ENCODE measurements at regions of chrX and their contacts with region 1.

Region 1: DNA sequence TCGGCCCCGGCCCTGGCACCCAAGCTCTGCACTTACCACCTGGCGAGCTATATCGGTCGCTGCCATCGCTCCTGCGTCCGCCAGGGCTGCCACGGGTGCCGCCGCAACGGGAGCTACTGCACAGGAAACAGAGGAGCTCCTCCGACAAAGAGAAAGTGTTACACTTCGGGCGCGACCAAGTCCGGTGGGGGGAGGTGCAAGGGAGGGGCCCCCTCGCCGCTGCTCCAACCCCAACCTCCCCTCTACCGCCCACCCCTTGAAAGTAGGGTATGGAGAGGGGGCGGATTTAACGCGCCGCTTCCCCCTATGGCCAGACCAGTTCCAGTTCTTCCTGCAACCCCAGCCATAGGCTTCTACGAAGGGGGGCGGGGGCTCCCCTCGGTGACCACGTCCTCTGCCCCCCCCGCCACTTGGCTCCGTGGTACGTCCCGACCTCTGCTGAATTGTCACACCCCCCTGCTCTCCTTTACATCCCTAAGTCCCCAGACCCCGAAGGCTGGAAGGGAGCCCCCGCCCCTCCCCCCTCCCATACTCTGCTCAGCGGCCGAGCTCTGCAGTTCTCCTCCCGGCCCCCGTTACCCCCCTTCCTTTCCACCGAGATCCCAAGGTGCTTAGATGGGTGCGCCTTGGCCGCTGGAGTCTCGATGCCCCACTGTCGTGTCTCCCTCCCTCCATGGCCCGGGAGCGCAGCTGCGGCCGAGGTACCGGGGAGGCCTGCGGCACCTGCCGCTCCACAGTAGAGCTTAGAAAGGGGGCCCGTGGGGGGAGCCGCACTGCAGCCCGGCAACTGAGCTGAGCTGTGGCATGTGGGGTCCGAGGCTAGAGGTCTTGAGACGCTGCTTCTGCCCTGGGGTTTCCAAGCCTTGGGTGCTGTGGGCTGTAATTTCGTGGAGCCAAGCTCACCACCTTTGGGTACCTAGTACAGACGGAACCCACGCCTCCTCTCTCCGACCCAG is at the start of gene SEPTIN6:
- DNase-seq: peak; percentile 90
- ATAC-seq: peak; percentile 76
- H3K4me3 Mint-ChIP-seq: peak within 1 kb of the TSS; percentile 96
- H3K27ac Mint-ChIP-seq: peak within 1 kb of the TSS; percentile 99
- H3K4me1 Mint-ChIP-seq: peaks cover 8% of the 10 kb centered on the region
- H3K27me3 Mint-ChIP-seq: no peaks in the 10 kb centered on the region
- CTCF ChIP-seq: no peak
- total RNA-seq, gene SEPTIN6: 205 to 209 TPM

Region 2: GRCh38 chrX:119647552-119648420 is 45.5 kb before region 1 on chrX:
- CTCF ChIA-PET with region 1: no interaction called
- POLR2A ChIA-PET with region 1: interaction called, 10 read pairs
- intact Hi-C with region 1: loop called (anchors 5 kb)
- DNase-seq: peak; percentile 83
- ATAC-seq: peak; percentile 95
- H3K4me3 Mint-ChIP-seq: no peak overlapping the region
- H3K27ac Mint-ChIP-seq: peak overlapping the region; percentile 93
- H3K4me1 Mint-ChIP-seq: peaks cover 36% of the 10 kb centered on the region
- H3K27me3 Mint-ChIP-seq: no peaks in the 10 kb centered on the region
- CTCF ChIP-seq: no peak

Region 3: DNA sequence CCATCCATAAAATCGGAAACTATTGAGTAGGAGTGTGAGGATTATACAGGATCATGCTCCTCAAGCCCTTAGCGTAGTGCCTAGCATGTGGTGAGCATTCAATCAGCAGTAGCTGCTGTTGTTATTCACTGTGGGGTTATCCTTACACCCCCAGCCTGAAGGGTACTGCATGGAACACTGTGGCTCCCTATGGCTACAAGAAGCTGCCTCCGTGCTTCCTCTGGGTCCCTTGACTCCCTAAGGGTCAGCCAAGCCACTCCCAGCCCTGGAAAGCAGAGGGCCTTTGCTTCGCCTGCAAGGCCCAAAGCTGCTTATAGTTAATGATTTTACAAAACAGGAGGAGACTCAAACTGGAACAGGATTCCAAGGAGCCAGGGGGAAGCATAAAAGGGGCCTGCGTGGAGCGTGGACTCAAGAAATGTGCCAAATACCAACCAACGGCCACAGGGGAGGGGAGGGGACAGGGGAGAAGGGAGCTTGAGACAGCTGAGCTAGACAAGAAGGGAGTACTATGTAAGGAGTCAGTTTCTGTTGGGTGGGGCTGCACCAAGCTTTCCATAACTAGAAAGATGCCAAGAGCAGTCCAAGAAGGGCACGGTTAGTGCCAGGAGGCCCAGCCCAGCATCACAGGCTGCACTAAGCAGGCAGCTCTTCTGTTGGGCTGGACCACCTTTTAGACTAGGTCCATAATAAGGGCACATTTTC is 16.2 kb before region 1 on chrX:
- CTCF ChIA-PET with region 1: interaction called, 14 read pairs
- POLR2A ChIA-PET with region 1: interaction called, 88 read pairs
- intact Hi-C with region 1: no loop called
- DNase-seq: no peak
- ATAC-seq: no peak
- H3K4me3 Mint-ChIP-seq: peak overlapping the region; percentile 76
- H3K27ac Mint-ChIP-seq: peak overlapping the region; percentile 95
- H3K4me1 Mint-ChIP-seq: peaks cover 49% of the 10 kb centered on the region
- H3K27me3 Mint-ChIP-seq: no peaks in the 10 kb centered on the region
- CTCF ChIP-seq: no peak

Region 4: GRCh38 chrX:119753571-119754257 is 60.4 kb after region 1 on chrX:
- CTCF ChIA-PET with region 1: interaction called, 3 read pairs
- POLR2A ChIA-PET with region 1: interaction called, 23 read pairs
- intact Hi-C with region 1: loop called (anchors 10 kb)
- DNase-seq: peak; percentile 69
- ATAC-seq: peak; percentile 62
- H3K4me3 Mint-ChIP-seq: no peak overlapping the region
- H3K27ac Mint-ChIP-seq: peak overlapping the region; percentile 94
- H3K4me1 Mint-ChIP-seq: peaks cover 51% of the 10 kb centered on the region
- H3K27me3 Mint-ChIP-seq: no peaks in the 10 kb centered on the region
- CTCF ChIP-seq: peak; percentile 62

Region 5: DNA sequence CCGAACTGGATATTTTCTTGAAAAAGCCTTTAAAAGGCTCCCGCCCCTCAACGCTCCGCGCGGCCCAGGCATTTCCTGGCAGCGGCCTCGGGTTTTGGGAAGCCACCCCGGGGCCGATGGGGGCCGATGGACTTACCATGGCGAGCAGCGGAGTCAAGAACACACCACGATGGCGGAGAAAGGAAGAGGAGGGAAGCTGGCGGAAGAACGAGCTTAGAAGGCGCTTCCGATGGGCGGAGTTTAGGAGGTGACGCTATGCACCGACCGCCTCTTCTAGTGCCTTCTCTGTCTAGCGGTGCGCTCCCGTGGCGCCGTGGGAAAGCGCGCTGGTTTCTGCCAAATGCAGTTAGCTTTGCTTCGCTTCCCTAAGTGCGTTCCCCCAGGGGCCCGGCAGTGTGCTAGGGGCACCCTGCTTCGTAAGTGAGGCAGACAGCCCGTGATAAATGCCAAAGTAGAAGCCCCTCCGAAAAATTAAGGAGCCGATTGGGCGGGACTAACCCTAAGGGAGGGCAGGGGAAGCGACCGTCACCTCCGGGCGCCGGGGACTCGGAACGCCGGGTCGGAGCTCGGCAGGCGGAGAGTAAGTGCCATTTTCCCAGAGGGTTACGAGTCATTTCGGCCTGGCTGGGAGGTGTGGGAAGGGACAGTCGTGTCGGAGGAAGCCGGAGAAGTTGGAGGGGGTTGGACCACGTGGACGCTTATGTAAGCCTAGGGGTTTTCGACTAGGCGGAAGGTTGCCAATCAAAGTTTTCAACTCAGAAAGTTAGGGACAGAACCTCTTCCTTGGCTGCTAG is 98.3 kb after region 1 on chrX and contains the start of gene RPL39:
- CTCF ChIA-PET with region 1: no interaction called
- POLR2A ChIA-PET with region 1: interaction called, 21 read pairs
- intact Hi-C with region 1: no loop called
- DNase-seq: peak; percentile 88
- ATAC-seq: peak; percentile 93
- H3K4me3 Mint-ChIP-seq: peak within 1 kb of the TSS; percentile 91
- H3K27ac Mint-ChIP-seq: peak within 1 kb of the TSS; percentile 96
- H3K4me1 Mint-ChIP-seq: peaks cover 23% of the 10 kb centered on the region
- H3K27me3 Mint-ChIP-seq: no peaks in the 10 kb centered on the region
- CTCF ChIP-seq: no peak
- total RNA-seq, gene RPL39: 2,778 to 2,808 TPM

Region 6: DNA sequence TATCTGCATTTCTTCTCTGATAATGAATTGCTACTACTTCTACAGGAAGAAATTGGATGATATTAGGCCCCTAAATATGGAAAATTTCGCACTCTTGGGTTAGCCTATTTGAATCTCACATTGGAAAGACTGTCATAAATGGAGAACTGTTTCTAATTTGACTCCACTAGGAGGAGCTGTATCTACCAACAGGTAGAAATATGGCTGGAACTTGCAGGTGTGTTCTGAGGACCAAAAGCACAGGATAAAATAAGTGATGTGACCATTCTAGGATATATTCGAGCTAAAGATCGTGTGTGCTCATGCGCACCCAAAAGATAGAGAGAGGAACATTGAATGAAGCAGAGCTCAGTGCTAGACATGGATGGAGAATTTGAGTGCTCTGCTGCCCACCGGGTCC is 255.1 kb after region 1 on chrX:
- CTCF ChIA-PET with region 1: no interaction called
- POLR2A ChIA-PET with region 1: no interaction called
- intact Hi-C with region 1: no loop called
- DNase-seq: no peak
- ATAC-seq: no peak
- H3K4me3 Mint-ChIP-seq: no peak overlapping the region
- H3K27ac Mint-ChIP-seq: no peak overlapping the region
- H3K4me1 Mint-ChIP-seq: peaks cover 8% of the 10 kb centered on the region
- H3K27me3 Mint-ChIP-seq: no peaks in the 10 kb centered on the region
- CTCF ChIP-seq: no peak

Measured in activated CD8-positive, alpha-beta T cell treated with anti-CD3 and anti-CD28 coated beads for 36 hours (primary cell).